GM10248 (cell line): ENCODE measurements at regions of chr3 and their contacts with region 1.

Region 1: DNA sequence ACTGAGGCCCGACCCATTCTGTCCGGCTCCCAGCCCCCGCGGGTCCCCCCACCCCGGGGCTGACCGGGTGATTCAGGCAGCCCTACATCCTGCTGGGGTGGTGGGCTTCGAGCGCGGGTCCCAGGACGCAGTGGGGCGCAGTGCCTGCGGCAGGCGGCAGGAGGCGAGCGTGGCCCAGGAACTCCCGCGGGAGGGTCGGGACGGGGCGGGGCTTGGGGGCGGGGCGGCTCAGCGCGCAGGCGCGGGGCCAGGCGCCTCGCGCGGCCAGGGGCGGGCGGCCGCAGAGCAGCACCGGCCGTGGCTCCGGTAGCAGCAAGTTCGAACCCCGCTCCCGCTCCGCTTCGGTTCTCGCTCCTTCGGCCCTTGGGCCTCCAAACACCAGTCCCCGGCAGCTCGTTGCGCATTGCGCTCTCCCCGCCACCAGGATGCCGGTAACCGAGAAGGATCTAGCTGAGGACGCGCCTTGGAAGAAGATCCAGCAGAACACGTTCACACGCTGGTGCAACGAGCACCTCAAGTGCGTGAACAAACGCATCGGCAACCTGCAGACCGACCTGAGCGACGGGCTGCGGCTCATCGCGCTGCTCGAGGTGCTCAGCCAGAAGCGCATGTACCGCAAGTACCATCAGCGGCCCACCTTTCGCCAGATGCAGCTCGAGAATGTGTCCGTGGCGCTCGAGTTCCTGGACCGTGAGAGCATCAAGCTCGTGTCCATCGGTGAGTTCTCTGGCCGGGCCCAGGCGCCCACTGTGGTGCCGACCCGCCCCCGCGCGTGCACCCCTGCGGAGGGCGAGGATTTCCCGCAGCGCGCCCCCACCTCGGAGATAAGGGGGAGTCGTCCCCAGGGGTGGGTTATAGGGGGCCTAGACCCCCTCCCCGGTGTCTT is at the start of gene FLNB:
- DNase-seq: peak; percentile 98
- CTCF ChIP-seq: peak; percentile 97

Region 2: DNA sequence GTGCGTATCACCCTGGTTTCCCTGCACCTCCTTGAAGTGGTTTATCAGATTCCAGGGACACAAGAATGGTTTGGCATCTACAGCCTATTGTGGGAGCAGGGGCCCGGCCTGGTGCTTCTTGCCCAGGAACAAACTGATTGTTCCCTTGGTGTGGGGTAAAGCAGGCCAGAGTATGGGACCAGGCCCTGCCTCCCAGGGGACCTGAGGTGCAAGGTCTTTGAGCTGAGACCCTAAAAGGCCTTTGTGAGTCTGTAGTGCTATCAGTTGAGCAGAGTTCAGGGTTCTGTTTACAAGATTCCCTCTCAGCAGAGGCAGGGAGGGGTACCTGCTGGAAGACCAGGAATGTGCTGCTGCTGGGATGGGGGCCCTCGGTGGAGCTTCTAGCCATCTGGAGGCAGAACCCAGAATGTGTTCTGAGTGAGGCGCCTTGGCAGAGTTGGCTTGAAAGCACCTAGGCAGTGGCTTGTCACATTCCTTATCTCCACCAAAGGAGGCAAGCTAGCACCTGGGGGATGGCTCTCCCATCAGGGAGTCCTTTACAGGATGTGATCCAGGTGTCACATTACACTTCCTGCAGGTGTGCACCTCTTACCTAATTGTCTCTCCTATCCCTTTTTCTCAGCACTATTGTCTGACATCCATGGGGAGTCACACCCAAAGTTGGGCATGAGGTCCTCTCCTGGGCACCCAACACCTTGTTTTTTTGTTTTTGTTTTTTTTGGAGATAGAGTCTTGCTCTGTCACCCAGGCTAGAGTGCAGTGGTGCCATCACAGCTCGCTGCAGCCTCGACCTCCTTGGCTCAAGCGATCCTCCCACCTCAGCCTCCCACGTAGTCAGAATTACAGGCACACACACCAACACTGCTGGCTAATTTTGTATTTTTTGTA is 12.9 kb after region 1 on chr3:
- CTCF ChIA-PET with region 1: interaction called, 22 read pairs
- POLR2A ChIA-PET with region 1: no interaction called
- DNase-seq: no peak
- CTCF ChIP-seq: no peak

Region 3: DNA sequence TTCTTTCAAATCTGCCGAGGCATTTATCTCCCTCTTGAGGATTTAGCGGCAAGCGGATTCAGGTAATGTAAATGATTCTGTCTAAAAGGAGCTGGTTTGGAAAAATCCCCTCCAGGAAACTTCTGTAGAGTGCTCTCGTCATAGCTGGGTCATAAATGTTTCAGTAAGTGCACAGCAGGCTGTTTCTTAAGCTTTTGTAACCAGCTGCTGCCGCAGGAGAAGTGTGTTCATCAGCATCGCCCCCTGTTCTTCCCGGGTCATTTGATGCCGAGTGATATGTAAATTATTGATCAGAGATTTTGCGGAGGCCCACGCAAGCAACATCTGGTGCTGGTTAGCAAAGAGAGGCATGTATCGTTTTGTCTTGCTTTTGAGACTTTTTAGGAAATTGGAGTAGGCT is 149.3 kb after region 1 on chr3:
- CTCF ChIA-PET with region 1: interaction called, 10 read pairs
- POLR2A ChIA-PET with region 1: no interaction called
- DNase-seq: no peak
- CTCF ChIP-seq: no peak

Region 4: DNA sequence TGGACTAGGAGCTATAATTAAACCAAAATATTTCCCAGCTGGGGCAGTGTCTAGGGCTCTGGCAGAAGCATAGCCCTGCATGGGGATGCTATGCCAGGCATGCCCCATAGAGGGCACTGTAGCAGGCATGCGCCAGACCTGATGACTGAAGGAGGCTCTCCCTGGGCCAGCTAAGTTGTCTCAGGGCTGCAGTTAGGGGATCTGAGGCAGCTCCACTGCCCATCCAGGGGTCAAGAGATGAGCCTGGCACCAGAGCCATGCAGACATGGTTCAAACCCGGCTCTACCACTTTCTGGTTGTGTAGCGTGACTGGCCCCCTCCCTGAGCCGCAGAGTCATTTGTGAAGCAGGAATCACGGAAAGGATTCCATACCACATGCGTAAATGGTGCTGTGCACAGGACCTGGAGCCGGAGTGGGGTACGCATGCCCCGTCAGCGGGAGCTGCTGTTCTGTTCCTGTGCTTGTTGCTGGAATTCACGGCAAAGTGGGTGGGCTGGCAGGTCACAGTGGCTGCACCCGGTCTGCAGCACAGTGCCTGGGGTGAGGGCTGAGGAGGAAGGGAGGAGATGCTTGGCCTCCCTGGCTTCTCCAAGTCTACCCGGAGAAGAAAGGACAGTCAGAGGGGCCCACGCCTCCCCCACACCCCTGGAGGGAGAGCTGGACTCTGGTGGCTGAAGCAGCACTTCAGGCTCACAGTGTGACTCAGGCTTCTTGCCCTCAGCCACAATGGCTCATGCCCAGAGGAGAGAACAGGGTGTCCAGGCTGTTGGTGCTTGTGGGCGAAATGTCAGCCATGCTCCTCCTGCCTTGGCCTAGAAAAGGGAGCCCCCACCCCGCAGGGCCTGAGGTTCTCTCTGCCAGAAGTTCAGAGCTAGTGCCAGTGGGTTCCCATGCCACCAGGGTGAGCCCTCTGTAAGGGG is 159.3 kb after region 1 on chr3:
- CTCF ChIA-PET with region 1: interaction called, 67 read pairs
- POLR2A ChIA-PET with region 1: no interaction called
- DNase-seq: peak; percentile 83
- CTCF ChIP-seq: peak; percentile 85